ENCODE measurements at regions of chr20 and their contacts with region 1.

Region 1: DNA sequence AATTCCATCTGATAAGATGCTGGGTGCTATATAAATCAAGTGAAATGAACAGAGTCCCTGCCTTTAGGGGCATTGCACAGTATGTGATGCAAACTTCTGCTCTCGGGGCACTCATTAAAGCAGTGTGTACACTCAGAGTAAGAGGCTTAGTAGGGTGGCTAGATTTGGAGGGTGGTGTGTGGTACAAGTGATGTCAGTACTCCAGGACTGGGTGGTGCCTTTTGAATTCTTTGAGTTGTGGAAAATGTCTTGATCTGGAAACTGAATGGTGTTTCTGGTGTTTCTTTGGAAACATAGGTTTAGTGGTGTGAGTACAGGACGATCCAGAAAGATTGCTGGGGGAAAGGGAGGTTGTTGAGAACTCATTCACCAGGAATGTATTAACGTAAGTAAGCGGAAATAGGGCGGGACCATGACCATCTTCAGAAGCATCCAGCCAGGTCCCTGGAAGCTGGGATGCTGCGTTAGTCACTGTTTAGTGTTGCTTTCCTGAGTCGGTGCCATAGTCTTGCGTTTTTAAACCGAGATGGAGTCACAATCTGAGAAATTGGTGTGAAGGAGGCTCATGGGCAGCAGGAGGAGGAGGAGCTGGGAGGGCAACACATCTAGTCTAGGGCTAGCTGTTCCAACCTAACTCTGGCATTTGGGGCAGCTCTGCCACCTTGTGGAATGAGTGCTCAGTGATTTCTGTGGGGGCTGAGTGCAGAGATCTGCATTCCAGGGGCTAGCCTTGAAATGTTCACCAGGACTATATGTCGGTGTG is 70.3 kb downstream of the SCAND1 start:
- DNase-seq: peak; percentile 95
- ATAC-seq: peak; percentile 95
- H3K4me3 ChIP-seq: peak overlapping the region; percentile 23 to 52
- H3K27ac ChIP-seq: peak overlapping the region; percentile 69
- H3K4me1 ChIP-seq: peaks cover 10% of the 10 kb centered on the region
- H3K27me3 ChIP-seq: no peaks in the 10 kb centered on the region
- CTCF ChIP-seq: peak; percentile 93

Region 2: GRCh38 chr20:35635652-35636051 is 248.3 kb before region 1 on chr20:
- CTCF ChIA-PET with region 1: no interaction called
- POLR2A ChIA-PET with region 1: no interaction called
- in situ Hi-C with region 1: no loop called
- intact Hi-C with region 1: no loop called
- DNase-seq: no peak
- ATAC-seq: no peak
- H3K4me3 ChIP-seq: no peak overlapping the region
- H3K27ac ChIP-seq: no peak overlapping the region
- H3K4me1 ChIP-seq: no peaks in the 10 kb centered on the region
- H3K27me3 ChIP-seq: no peaks in the 10 kb centered on the region
- CTCF ChIP-seq: no peak

Region 3: GRCh38 chr20:35718972-35719635 is 164.9 kb before region 1 on chr20:
- CTCF ChIA-PET with region 1: no interaction called
- POLR2A ChIA-PET with region 1: interaction called, 16 read pairs
- in situ Hi-C with region 1: no loop called
- intact Hi-C with region 1: no loop called
- DNase-seq: no peak
- ATAC-seq: peak; percentile 34; the same call in 1 of the 2 replicates
- H3K4me3 ChIP-seq: no peak overlapping the region
- H3K27ac ChIP-seq: no peak overlapping the region
- H3K4me1 ChIP-seq: no peaks in the 10 kb centered on the region
- H3K27me3 ChIP-seq: no peaks in the 10 kb centered on the region
- CTCF ChIP-seq: no peak

Region 4: GRCh38 chr20:35771689-35772562 is 112.0 kb before region 1 on chr20 and contains the start of gene PHF20:
- CTCF ChIA-PET with region 1: interaction called, 10 read pairs
- POLR2A ChIA-PET with region 1: no interaction called
- in situ Hi-C with region 1: no loop called
- intact Hi-C with region 1: no loop called
- DNase-seq: peak; percentile 78
- ATAC-seq: peak; percentile 97
- H3K4me3 ChIP-seq: peak within 1 kb of the TSS; percentile 79 to 81
- H3K27ac ChIP-seq: peak within 1 kb of the TSS; percentile 95
- H3K4me1 ChIP-seq: peaks cover 34% of the 10 kb centered on the region
- H3K27me3 ChIP-seq: no peaks in the 10 kb centered on the region
- CTCF ChIP-seq: no peak
- total RNA-seq, gene PHF20: 51.5 TPM